ENCODE measurements at regions of chr4 and their contacts with region 1.

Region 1: GRCh38 chr4:142405021-142405694 is 440.9 kb downstream of the INPP4B start:
- DNase-seq: peak; percentile 71
- H3K4me3 Mint-ChIP-seq: peak overlapping the region; percentile 86
- H3K27ac Mint-ChIP-seq: peak overlapping the region; percentile 99
- H3K4me1 Mint-ChIP-seq: peaks cover 59% of the 10 kb centered on the region
- H3K27me3 Mint-ChIP-seq: no peaks in the 10 kb centered on the region

Region 2: GRCh38 chr4:141933978-141934377 is 471.2 kb before region 1 on chr4:
- CTCF ChIA-PET with region 1: no interaction called
- POLR2A ChIA-PET with region 1: no interaction called
- DNase-seq: no peak
- H3K4me3 Mint-ChIP-seq: no peak overlapping the region
- H3K27ac Mint-ChIP-seq: no peak overlapping the region
- H3K4me1 Mint-ChIP-seq: no peaks in the 10 kb centered on the region
- H3K27me3 Mint-ChIP-seq: no peaks in the 10 kb centered on the region

Region 3: DNA sequence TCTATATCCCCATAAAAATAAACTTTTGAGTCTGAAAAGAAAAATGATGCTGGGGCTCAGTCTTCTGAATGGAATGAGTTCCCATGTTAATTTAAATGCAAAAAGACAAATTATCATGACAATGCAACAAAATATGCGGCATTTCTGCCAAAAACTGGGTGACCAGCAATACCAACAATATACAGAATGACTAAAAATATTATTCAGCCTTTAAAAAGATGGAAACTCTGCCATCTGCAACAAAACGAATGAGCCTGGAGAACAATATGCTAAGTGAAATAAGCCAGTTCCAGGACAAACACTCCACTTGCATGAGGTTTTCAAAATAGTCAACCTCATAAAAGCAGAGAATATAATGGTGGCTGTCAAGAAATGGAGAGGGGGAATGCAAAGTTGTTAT is 210.3 kb before region 1 on chr4:
- CTCF ChIA-PET with region 1: no interaction called
- POLR2A ChIA-PET with region 1: no interaction called
- DNase-seq: no peak
- H3K4me3 Mint-ChIP-seq: no peak overlapping the region
- H3K27ac Mint-ChIP-seq: no peak overlapping the region
- H3K4me1 Mint-ChIP-seq: no peaks in the 10 kb centered on the region
- H3K27me3 Mint-ChIP-seq: no peaks in the 10 kb centered on the region

Region 4: DNA sequence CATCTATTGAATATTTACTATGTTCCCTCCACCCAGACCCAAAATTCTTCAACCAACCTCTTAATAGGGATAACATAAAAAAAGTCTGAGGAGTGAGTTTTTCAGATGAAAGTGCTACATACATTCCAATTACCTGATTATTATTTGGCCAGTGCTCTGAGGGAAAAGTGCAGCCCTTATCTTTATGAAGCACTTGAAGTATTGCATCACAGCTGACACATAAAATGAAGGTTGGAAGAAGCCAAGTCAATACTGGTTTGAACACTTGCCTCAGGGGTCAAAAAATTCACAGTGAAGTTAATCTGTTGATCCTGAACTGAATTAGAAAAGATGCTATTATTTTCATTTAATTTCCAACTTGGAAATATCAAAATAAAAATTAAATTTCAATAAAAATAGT is 57.9 kb before region 1 on chr4:
- CTCF ChIA-PET with region 1: interaction called, 65 read pairs
- POLR2A ChIA-PET with region 1: interaction called, 119 read pairs
- DNase-seq: no peak
- H3K4me3 Mint-ChIP-seq: peak overlapping the region; percentile 25
- H3K27ac Mint-ChIP-seq: no peak overlapping the region
- H3K4me1 Mint-ChIP-seq: peaks cover 59% of the 10 kb centered on the region
- H3K27me3 Mint-ChIP-seq: no peaks in the 10 kb centered on the region

Region 5: GRCh38 chr4:142372530-142373260 is 32.5 kb before region 1 on chr4:
- CTCF ChIA-PET with region 1: interaction called, 7 read pairs
- POLR2A ChIA-PET with region 1: interaction called, 44 read pairs
- DNase-seq: no peak
- H3K4me3 Mint-ChIP-seq: no peak overlapping the region
- H3K27ac Mint-ChIP-seq: peak overlapping the region; percentile 51
- H3K4me1 Mint-ChIP-seq: peaks cover 67% of the 10 kb centered on the region
- H3K27me3 Mint-ChIP-seq: no peaks in the 10 kb centered on the region

Region 6: GRCh38 chr4:142386449-142386848 is 18.7 kb before region 1 on chr4:
- CTCF ChIA-PET with region 1: interaction called, 3 read pairs
- POLR2A ChIA-PET with region 1: interaction called, 57 read pairs
- DNase-seq: no peak
- H3K4me3 Mint-ChIP-seq: peak overlapping the region; percentile 65
- H3K27ac Mint-ChIP-seq: peak overlapping the region; percentile 64
- H3K4me1 Mint-ChIP-seq: peaks cover 59% of the 10 kb centered on the region
- H3K27me3 Mint-ChIP-seq: no peaks in the 10 kb centered on the region

Region 7: GRCh38 chr4:142452161-142452855 is 47.1 kb after region 1 on chr4:
- CTCF ChIA-PET with region 1: no interaction called
- POLR2A ChIA-PET with region 1: no interaction called
- DNase-seq: no peak
- H3K4me3 Mint-ChIP-seq: no peak overlapping the region
- H3K27ac Mint-ChIP-seq: no peak overlapping the region
- H3K4me1 Mint-ChIP-seq: no peaks in the 10 kb centered on the region
- H3K27me3 Mint-ChIP-seq: no peaks in the 10 kb centered on the region

Region 8: GRCh38 chr4:142558851-142559250 is 153.7 kb after region 1 on chr4:
- CTCF ChIA-PET with region 1: no interaction called
- POLR2A ChIA-PET with region 1: interaction called, 22 read pairs
- DNase-seq: no peak
- H3K4me3 Mint-ChIP-seq: peak overlapping the region; percentile 25
- H3K27ac Mint-ChIP-seq: peak overlapping the region; percentile 66
- H3K4me1 Mint-ChIP-seq: peaks cover 66% of the 10 kb centered on the region
- H3K27me3 Mint-ChIP-seq: no peaks in the 10 kb centered on the region

Region 9: GRCh38 chr4:142703694-142704309 is 298.6 kb after region 1 on chr4:
- CTCF ChIA-PET with region 1: no interaction called
- POLR2A ChIA-PET with region 1: interaction called, 36 read pairs
- DNase-seq: peak; percentile 41
- H3K4me3 Mint-ChIP-seq: no peak overlapping the region
- H3K27ac Mint-ChIP-seq: no peak overlapping the region
- H3K4me1 Mint-ChIP-seq: peaks cover 27% of the 10 kb centered on the region
- H3K27me3 Mint-ChIP-seq: no peaks in the 10 kb centered on the region

Measured in activated CD4-positive, alpha-beta memory T cell treated with anti-CD3 and anti-CD28 coated beads, Interleukin-2, amount 10 ng/mL, durations not matched to agents 7 days and 5 days (primary cell).